MCF 10A (cell line): ENCODE measurements at regions of chr14 and their contacts with region 1.

Region 1: GRCh38 chr14:69535230-69535848 is 39.3 kb downstream of the CCDC177 start:
- DNase-seq: peak; percentile 72
- H3K4me3 Mint-ChIP-seq: no peak overlapping the region
- H3K27ac Mint-ChIP-seq: no peak overlapping the region
- H3K4me1 Mint-ChIP-seq: no peaks in the 10 kb centered on the region
- H3K27me3 Mint-ChIP-seq: peaks cover 18% of the 10 kb centered on the region
- CTCF ChIP-seq: peak; percentile 69

Region 2: GRCh38 chr14:69726761-69727511 is 191.6 kb after region 1 on chr14:
- CTCF ChIA-PET with region 1: interaction called, 7 read pairs
- POLR2A ChIA-PET with region 1: no interaction called
- intact Hi-C with region 1: loop called (anchors 2 kb)
- DNase-seq: peak; percentile 79
- H3K4me3 Mint-ChIP-seq: peak overlapping the region; percentile 59
- H3K27ac Mint-ChIP-seq: no peak overlapping the region
- H3K4me1 Mint-ChIP-seq: peaks cover 6% of the 10 kb centered on the region
- H3K27me3 Mint-ChIP-seq: no peaks in the 10 kb centered on the region
- CTCF ChIP-seq: peak; percentile 94